ENCODE measurements at regions of chr6 and their contacts with region 1.

Region 1: DNA sequence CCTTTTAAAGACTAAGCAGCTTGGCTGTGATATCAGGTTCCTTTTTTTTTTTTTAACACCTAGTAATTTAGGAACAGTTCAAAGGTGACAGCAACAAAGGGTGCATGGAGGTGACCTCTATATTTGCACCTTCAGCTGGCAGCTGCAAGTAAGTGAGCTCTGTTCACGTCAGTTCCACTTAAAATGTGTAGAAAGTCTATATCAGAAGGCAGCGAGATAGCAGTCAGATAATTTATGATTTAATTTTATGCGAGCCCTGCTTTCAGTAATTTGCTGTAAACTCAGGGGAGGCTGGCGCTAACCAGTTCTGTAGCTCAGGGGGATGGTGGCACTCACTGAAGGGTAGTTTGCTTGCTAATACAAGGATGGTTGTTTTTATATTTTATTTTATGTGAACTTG is 602.8 kb upstream of the MMS22L start:
- DNase-seq: no peak
- H3K4me3 ChIP-seq: no peak overlapping the region
- H3K27ac ChIP-seq: no peak overlapping the region
- H3K4me1 ChIP-seq: no peaks in the 10 kb centered on the region
- H3K27me3 ChIP-seq: no peaks in the 10 kb centered on the region
- CTCF ChIP-seq: no peak
- EP300 ChIP-seq: no peak
- POLR2A ChIP-seq: no peak

Region 2: GRCh38 chr6:97654674-97655073 is 231.2 kb before region 1 on chr6:
- in situ Hi-C with region 1: no loop called
- intact Hi-C with region 1: loop called (anchors 5 kb)
- DNase-seq: no peak
- H3K4me3 ChIP-seq: no peak overlapping the region
- H3K27ac ChIP-seq: no peak overlapping the region
- H3K4me1 ChIP-seq: no peaks in the 10 kb centered on the region
- H3K27me3 ChIP-seq: no peaks in the 10 kb centered on the region
- CTCF ChIP-seq: no peak
- EP300 ChIP-seq: no peak
- POLR2A ChIP-seq: no peak

Region 3: GRCh38 chr6:97841763-97842162 is 44.1 kb before region 1 on chr6:
- in situ Hi-C with region 1: no loop called
- intact Hi-C with region 1: no loop called
- DNase-seq: no peak
- H3K4me3 ChIP-seq: no peak overlapping the region
- H3K27ac ChIP-seq: no peak overlapping the region
- H3K4me1 ChIP-seq: no peaks in the 10 kb centered on the region
- H3K27me3 ChIP-seq: no peaks in the 10 kb centered on the region
- CTCF ChIP-seq: no peak
- EP300 ChIP-seq: no peak
- POLR2A ChIP-seq: no peak